Aorta (tissue), 5 donors: ENCODE measurements at regions of chr1 and their contacts with region 1.

Region 1: GRCh38 chr1:151198255-151199127 is at the start of gene PIP5K1A:
- DNase-seq: peak; percentile 100
- ATAC-seq: peak; percentile 97
- H3K4me3 ChIP-seq: peak within 1 kb of the TSS; percentile 69 to 72
- H3K27ac ChIP-seq: peak within 1 kb of the TSS; percentile 14 to 81
- H3K4me1 ChIP-seq: peaks cover 0 to 2% of the 10 kb centered on the region in 2 donors
- H3K27me3 ChIP-seq: no peaks in the 10 kb centered on the region
- total RNA-seq, gene PIP5K1A: 64.0 to 67.6 TPM

Region 2: DNA sequence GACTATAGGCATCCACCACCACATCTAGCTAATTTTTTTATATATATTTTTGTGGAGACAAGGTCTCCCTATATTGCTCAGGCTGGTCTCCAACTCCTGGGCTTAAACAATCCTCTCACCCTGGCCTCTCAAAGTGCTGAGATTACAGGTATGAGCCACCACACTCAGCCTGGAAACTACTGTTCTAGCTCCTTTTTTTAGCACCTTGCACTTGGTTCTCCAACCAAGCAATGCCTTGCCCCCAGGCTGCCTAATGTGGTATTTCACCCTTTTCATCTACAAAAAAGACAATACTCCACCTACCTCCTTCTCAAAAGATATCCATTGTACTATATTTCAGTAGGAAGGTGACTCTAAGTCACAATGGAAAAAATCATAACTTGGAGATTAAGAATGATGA is 328.8 kb before region 1 on chr1:
- intact Hi-C with region 1: no loop called
- DNase-seq: no peak
- ATAC-seq: no peak
- H3K4me3 ChIP-seq: no peak overlapping the region
- H3K27ac ChIP-seq: no peak overlapping the region
- H3K4me1 ChIP-seq: no peaks in the 10 kb centered on the region
- H3K27me3 ChIP-seq: no peaks in the 10 kb centered on the region

Region 3: DNA sequence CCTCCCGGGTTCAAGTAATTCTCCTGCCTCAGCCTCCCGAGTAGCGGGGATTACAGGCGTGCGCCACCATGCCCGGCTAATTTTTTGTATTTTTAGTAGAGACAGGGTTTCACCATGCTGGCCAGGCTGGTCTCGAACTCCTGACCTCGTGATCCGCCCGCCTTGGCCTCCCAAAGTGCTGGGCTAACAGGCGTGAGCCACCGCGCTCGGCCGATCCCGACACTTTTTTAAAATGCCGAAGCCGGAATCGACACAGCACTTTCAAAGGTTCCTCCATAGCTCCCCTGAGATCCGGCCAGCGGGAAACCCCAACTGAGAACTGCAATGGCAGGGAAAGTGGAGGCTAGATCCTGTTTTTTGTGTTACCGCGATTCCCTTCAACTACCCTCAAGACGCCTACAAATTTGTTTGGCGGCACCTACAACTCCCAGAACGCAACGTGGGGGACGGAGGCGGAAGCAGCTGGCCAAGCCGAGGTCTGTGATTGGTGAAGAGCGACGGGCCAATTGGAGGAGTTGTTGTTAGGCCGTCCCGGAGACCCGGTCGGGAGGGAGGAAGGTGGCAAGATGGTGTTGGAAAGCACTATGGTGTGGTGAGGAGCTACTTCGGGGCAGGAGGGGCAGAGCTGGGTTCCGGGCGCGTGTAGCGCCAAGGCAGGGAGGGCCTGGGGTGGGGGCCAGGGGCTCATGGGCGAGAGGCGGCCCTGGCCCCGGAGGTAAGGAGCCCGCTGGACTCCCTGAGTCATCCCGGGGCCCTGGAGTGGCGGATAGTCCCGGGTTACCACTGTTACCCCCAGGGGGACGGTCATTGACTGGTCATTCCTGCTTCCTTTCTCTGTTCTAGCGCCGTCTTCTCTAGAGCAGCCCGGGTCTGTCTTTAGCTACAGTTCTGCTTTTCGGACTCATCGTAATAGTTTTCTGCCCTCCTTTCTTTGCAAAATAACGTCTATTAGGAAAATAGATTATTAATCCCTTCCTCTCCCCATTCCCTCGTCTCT is 56.0 kb after region 1 on chr1 and contains the start of gene PSMD4:
- intact Hi-C with region 1: loop called (anchors 2 to 5 kb)
- DNase-seq: peak; percentile 97 to 98
- ATAC-seq: peak; percentile 98
- H3K4me3 ChIP-seq: peak within 1 kb of the TSS; percentile 67 to 78
- H3K27ac ChIP-seq: peak within 1 kb of the TSS; percentile 37 to 49
- H3K4me1 ChIP-seq: peaks cover 0 to 3% of the 10 kb centered on the region in 2 donors
- H3K27me3 ChIP-seq: no peaks in the 10 kb centered on the region
- total RNA-seq, gene PSMD4: 115 to 118 TPM

Region 4: DNA sequence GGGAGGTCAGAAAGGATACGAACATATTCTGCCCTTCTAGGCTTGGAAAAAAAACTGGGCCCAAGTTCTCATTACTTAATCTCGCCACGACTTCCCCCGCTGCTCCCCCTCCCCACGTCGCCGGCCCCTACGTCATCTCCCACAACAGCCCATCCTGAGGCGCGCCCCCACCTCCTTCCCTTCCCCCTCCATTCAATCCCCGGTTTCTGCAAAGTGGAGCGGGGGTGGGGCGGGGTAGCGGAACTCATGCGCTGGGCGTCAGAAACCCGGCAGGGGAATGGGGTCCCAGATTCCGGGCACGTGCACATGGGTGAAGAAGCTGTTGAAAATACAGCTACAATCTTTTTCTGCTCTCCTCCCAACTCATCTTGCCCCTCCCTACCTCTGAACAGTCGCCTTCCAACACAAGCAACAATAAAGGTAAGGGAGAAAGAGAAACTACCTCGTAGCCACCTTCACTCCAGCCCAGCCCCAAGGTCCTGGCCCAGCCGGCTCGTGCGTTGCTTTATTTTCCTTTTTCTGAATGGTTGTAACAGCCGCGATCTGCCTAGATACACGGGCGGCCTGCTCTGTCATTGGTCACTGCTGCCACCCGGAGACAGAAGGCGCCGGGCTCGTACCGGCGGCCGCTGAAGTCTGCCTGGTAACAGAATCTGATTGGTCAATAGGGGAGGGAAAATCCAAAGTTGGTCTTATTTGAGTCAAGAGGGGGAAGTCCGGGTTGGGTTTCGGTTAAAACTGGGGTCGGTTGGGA is 148.5 kb after region 1 on chr1 and contains the start of gene RFX5:
- intact Hi-C with region 1: loop called in 1 of 2 experiments (anchors 10 kb)
- DNase-seq: peak; percentile 96 to 97
- ATAC-seq: peak; percentile 99
- H3K4me3 ChIP-seq: peak within 1 kb of the TSS; percentile 63 to 91
- H3K27ac ChIP-seq: peak within 1 kb of the TSS; percentile 6 to 73
- H3K4me1 ChIP-seq: peaks cover 0 to 3% of the 10 kb centered on the region in 2 donors
- H3K27me3 ChIP-seq: no peaks in the 10 kb centered on the region
- total RNA-seq, gene RFX5: 38.0 to 51.6 TPM